ENCODE measurements at regions of chr10 and their contacts with region 1.

Region 1: GRCh38 chr10:50417886-50418830 is 166.8 kb upstream of the ASAH2 start:
- DNase-seq: peak in 7 of 10 donors; percentile 7 to 75 (median 48)
- H3K4me3 ChIP-seq: peak overlapping the region; percentile 45 to 89 (median 76)
- H3K27ac ChIP-seq: peak overlapping the region; percentile 3 to 94 (median 87)
- H3K27me3 ChIP-seq: no peaks in the 10 kb centered on the region
- CTCF ChIP-seq: peak in 28 of 56 donors; percentile 3 to 50 (median 23)

Region 2: GRCh38 chr10:50367732-50368131 is 50.4 kb before region 1 on chr10:
- intact Hi-C with region 1: loop called in 1 of 2 experiments (anchors 10 kb)
- DNase-seq: no peak
- H3K4me3 ChIP-seq: no peak overlapping the region
- H3K27ac ChIP-seq: no peak overlapping the region
- H3K27me3 ChIP-seq: no peaks in the 10 kb centered on the region
- CTCF ChIP-seq: peak in 39 of 56 donors; percentile 9 to 45 (median 26)

Region 3: GRCh38 chr10:50501918-50502452 is 83.8 kb after region 1 on chr10:
- intact Hi-C with region 1: loop called (anchors 5 kb)
- DNase-seq: no peak
- H3K4me3 ChIP-seq: no peak overlapping the region
- H3K27ac ChIP-seq: peak overlapping the region in 58 of 59 donors; percentile 7 to 100 (median 96)
- H3K27me3 ChIP-seq: no peaks in the 10 kb centered on the region
- CTCF ChIP-seq: peak in 3 of 56 donors; percentile 14 to 29 (median 24)

Region 4: DNA sequence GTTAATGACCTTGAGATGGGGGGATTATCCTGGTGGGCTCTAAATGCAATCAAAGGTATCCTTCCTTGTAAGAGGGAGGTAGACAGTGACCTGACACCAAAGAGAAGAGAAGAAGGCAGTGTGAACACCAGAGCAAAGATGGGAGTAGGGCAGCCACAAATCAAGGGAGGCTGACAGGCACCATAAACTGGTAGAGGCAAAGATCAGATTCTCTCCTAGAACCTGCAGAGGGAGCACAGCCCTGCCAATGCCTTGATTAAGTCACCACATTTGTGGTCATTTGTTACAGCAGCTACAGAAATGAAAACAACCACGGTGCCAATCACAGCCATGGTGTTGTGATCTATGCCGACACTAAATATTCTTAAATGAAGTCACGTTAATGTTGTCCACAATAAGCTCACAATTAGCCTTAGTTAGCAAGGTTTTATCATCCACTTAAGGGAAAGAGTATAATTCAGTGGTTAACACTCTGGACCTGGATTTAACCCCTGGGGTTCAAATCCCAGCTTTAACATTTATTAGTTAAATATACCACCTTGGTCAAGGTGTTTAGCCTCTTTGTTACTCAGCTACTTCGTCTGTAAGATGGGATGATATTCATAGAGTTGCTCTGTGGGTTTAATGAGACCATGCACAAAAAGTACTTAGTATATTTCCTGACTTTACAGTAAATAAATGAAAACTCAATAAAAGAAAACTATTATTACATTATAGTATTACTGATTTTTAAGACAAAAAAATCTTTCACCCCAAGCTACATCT is 134.8 kb after region 1 on chr10:
- intact Hi-C with region 1: loop called in 1 of 2 experiments (anchors 10 kb)
- DNase-seq: no peak
- H3K4me3 ChIP-seq: peak overlapping the region in 4 of 59 donors; percentile 1 to 37 (median 9)
- H3K27ac ChIP-seq: peak overlapping the region in 56 of 59 donors; percentile 1 to 86 (median 71)
- H3K27me3 ChIP-seq: no peaks in the 10 kb centered on the region
- CTCF ChIP-seq: peak in 42 of 56 donors; percentile 10 to 66 (median 40)

Measured in dorsolateral prefrontal cortex (tissue), 120 donors.